ENCODE measurements at regions of chr3 and their contacts with region 1.

Region 1: GRCh38 chr3:160754855-160755747 is 930 bp upstream of the PPM1L start:
- DNase-seq: peak; percentile 93 to 95
- ATAC-seq: peak; percentile 92 to 98 (median 95)
- H3K4me3 ChIP-seq: peak overlapping the region; percentile 85 to 97 (median 90)
- H3K27ac ChIP-seq: peak overlapping the region; percentile 87 to 97 (median 94)
- H3K4me1 ChIP-seq: peaks cover 0 to 44% (median 35%) of the 10 kb centered on the region in 9 donors
- H3K27me3 ChIP-seq: no peaks in the 10 kb centered on the region
- CTCF ChIP-seq: peak in 1 of 9 donors; percentile 13

Region 2: DNA sequence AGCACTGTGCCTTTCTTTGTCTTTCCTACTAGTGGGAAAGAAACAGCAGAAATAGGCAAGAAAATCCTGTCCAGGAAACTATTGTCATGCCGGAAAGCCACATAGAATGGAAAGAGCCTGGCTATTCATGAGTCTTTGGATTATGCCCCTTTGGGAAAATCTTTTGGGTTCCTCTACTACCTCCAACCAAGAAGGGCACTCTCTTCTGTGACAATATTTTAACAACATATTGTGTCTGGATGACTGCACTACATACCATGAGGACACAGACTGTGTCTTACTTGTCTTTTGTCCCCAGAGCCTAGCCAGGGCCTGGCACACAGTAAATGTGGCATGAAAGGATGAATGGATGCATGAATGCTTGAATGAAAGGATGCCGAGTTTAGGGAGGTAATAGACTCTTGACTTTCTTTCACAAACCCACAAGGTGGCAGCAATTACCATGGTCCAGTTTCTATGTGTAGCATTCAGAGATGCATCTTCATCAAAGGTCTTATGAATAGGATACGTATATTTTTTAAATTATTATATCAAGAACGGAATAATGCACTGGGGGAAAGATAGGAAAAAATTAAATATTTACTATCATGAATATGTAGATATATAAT is 47.8 kb before region 1 on chr3:
- intact Hi-C with region 1: loop called in 2 of 10 experiments (anchors 5 kb)
- DNase-seq: peak in 1 of 2 donors; percentile 61
- ATAC-seq: peak; percentile 64 to 82 (median 79)
- H3K4me3 ChIP-seq: no peak overlapping the region
- H3K27ac ChIP-seq: no peak overlapping the region
- H3K4me1 ChIP-seq: no peaks in the 10 kb centered on the region
- H3K27me3 ChIP-seq: peaks cover 0 to 19% (median 0%) of the 10 kb centered on the region in 7 donors
- CTCF ChIP-seq: peak; percentile 31 to 78 (median 67)

Region 3: DNA sequence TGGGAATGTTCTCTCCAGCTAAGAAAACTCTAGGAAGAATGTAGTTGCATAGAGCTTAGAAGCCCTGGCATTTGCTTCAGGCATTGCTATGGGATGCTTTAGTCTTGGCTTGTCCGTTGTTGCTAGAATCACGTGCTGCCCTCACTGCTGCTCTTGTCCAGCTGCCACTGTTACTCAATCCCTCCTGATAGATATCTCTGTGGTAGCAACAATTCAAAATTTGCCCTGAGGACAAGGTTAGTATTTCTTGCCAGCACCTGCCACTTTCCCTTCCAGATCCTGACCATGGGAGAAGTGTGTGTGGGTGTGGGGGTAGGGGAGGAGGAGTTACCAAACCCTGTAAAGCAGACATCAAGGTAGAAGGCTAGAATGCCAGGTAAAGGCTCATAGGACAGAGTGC is 114.7 kb after region 1 on chr3:
- intact Hi-C with region 1: loop called in 1 of 10 experiments (anchors 5 kb)
- DNase-seq: peak; percentile 10 to 44
- ATAC-seq: peak; percentile 63 to 92 (median 87)
- H3K4me3 ChIP-seq: peak overlapping the region in 9 of 10 donors; percentile 6 to 44 (median 36)
- H3K27ac ChIP-seq: peak overlapping the region in 9 of 10 donors; percentile 54 to 75 (median 68)
- H3K4me1 ChIP-seq: peaks cover 0 to 28% (median 8%) of the 10 kb centered on the region in 9 donors
- H3K27me3 ChIP-seq: no peaks in the 10 kb centered on the region
- CTCF ChIP-seq: no peak

Region 4: GRCh38 chr3:160929595-160929994 is 174.5 kb after region 1 on chr3:
- intact Hi-C with region 1: loop called in 5 of 10 experiments (anchors 5 kb)
- DNase-seq: peak; percentile 57 to 69
- ATAC-seq: peak; percentile 72 to 94 (median 90)
- H3K4me3 ChIP-seq: no peak overlapping the region
- H3K27ac ChIP-seq: no peak overlapping the region
- H3K4me1 ChIP-seq: peaks cover 0 to 43% (median 12%) of the 10 kb centered on the region in 9 donors
- H3K27me3 ChIP-seq: no peaks in the 10 kb centered on the region
- CTCF ChIP-seq: peak in 7 of 9 donors; percentile 26 to 53 (median 44)

Region 5: GRCh38 chr3:160948272-160948671 is 193.2 kb after region 1 on chr3:
- intact Hi-C with region 1: loop called in 4 of 10 experiments (anchors 2 to 5 kb)
- DNase-seq: no peak
- ATAC-seq: peak in 1 of 8 donors; percentile 27
- H3K4me3 ChIP-seq: no peak overlapping the region
- H3K27ac ChIP-seq: peak overlapping the region in 1 of 10 donors; percentile 13
- H3K4me1 ChIP-seq: peaks cover 0 to 36% (median 16%) of the 10 kb centered on the region in 9 donors
- H3K27me3 ChIP-seq: no peaks in the 10 kb centered on the region
- CTCF ChIP-seq: no peak